Activated naive CD4-positive, alpha-beta T cell treated with anti-CD3 and anti-CD28 coated beads, Interleukin-2, amount 10 ng/mL, durations not matched to agents 7 days and 5 days (primary cell): ENCODE measurements at regions of chr6 and their contacts with region 1.

Region 1: DNA sequence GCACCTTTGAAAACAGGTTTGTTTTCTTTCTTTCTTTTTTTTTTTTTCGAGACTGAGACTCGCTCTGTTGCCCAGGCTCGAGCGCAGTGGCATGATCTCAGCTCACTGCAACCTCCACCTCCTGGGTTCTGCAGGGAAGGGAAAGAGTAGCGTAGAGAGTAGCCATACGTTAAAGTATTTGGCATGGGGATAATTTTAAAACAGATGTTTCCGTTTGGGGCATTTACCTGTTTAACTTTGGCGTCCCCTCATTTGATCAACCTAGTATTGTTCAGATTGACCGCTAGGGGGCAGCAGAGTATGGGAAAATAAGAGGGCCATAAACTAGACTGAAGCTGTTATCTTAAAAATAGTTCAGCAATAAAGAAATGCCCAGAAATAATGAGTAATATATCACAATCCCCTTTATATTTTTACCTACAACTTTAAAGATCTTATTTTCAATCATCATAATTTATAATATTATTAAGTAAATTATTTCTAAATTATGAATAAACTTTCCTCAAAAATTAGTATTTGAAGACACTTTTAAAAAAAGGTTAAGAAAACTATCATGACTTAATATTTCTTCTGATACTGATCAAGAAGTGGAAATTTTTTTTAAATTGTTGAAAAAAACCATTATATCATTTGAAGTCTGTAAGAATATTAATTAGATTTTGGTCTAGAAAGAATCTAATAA is 7.6 kb upstream of the TAAR9 start:
- DNase-seq: peak; percentile 78
- H3K4me3 Mint-ChIP-seq: no peak overlapping the region
- H3K27ac Mint-ChIP-seq: no peak overlapping the region
- H3K4me1 Mint-ChIP-seq: peaks cover 2% of the 10 kb centered on the region
- H3K27me3 Mint-ChIP-seq: peaks cover 19% of the 10 kb centered on the region

Region 2: DNA sequence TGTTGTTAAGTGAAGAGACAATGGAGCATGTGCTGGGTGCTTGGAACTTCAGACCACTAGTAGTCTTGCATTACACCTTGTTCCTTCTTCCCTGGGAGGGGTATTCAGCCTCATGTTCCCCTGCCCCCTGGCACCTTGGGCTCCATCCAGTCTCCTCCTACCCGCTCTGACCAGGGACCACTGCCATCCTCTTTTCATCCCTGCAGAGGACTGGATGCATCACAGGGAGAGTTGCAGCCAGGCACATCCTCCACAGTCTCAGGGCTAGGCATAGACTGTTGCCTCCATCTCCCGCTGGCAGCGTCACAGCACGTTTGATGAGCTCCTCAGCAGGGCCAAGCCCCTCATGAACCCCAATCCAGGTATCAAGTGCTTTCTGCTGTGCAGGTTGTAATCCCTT is 20.8 kb after region 1 on chr6:
- CTCF ChIA-PET with region 1: interaction called, 10 read pairs
- DNase-seq: no peak
- H3K4me3 Mint-ChIP-seq: no peak overlapping the region
- H3K27ac Mint-ChIP-seq: no peak overlapping the region
- H3K4me1 Mint-ChIP-seq: no peaks in the 10 kb centered on the region
- H3K27me3 Mint-ChIP-seq: peaks cover 33% of the 10 kb centered on the region